ENCODE measurements at regions of chr10 and their contacts with region 1.

Region 1: GRCh38 chr10:115417585-115418265 is 324.6 kb downstream of the ATRNL1 start:
- DNase-seq: peak; percentile 51
- H3K4me3 Mint-ChIP-seq: no peak overlapping the region
- H3K27ac Mint-ChIP-seq: no peak overlapping the region
- H3K4me1 Mint-ChIP-seq: no peaks in the 10 kb centered on the region
- H3K27me3 Mint-ChIP-seq: no peaks in the 10 kb centered on the region
- CTCF ChIP-seq: peak; percentile 66

Region 2: GRCh38 chr10:115141254-115141653 is 276.5 kb before region 1 on chr10:
- CTCF ChIA-PET with region 1: no interaction called
- intact Hi-C with region 1: loop called (anchors 1 kb)
- DNase-seq: no peak
- H3K4me3 Mint-ChIP-seq: no peak overlapping the region
- H3K27ac Mint-ChIP-seq: no peak overlapping the region
- H3K4me1 Mint-ChIP-seq: no peaks in the 10 kb centered on the region
- H3K27me3 Mint-ChIP-seq: peaks cover 19% of the 10 kb centered on the region
- CTCF ChIP-seq: no peak

Region 3: GRCh38 chr10:115171392-115171960 is 246.2 kb before region 1 on chr10:
- CTCF ChIA-PET with region 1: no interaction called
- intact Hi-C with region 1: loop called (anchors 1 kb)
- DNase-seq: no peak
- H3K4me3 Mint-ChIP-seq: no peak overlapping the region
- H3K27ac Mint-ChIP-seq: no peak overlapping the region
- H3K4me1 Mint-ChIP-seq: peaks cover 9% of the 10 kb centered on the region
- H3K27me3 Mint-ChIP-seq: no peaks in the 10 kb centered on the region
- CTCF ChIP-seq: peak; percentile 13